ENCODE measurements at regions of chr2 and their contacts with region 1.

Region 1: GRCh38 chr2:240579771-240580614 is 6.5 kb upstream of the CAPN10 start:
- DNase-seq: peak; percentile 76
- H3K4me3 ChIP-seq: no peak overlapping the region
- H3K27ac ChIP-seq: peak overlapping the region; percentile 69
- H3K4me1 ChIP-seq: peaks cover 61% of the 10 kb centered on the region
- CTCF ChIP-seq: peak; percentile 75

Region 2: DNA sequence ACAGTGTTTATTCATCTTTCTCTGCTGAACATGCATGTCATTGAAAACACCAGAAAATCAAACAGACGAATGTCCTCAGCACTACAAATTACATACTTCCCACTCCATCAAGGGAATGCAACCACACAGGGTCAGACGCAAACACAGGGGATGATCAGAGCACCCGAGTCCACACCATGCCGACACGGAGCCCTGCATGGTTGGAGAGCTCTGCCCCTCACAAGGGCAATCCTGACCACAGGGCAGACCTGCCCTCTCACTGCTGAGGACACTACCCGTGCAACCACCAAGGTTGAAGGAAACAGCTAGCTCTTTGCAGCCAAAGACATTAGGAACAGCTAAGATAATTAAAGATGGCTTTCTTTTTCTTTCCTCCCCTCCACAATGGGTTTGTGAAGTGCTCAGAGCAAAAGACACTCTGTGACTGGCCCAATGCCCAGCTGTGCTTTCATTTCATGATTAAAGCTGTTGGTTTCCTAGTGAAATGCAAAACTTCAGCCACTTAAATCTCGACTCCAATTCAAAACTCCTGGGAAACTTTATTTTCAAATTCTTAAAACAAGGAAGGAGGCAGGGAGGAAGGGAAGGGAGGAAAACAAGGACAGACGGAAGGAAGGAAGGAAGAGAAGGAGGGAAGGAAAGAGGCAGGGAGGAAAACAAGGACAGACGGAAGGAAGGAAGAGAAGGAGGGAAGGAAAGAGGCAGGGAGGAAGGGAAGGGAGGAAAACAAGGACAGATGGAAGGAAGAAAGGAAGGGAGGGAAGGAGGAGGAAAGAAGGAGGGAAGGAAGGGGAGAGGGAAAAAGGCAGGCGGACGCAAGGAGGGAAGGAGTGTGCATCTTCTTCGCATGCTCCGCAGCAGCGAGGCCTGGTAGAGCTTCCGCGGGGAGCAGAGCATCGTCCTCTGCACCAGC is 620.7 kb before region 1 on chr2:
- CTCF ChIA-PET with region 1: no interaction called
- POLR2A ChIA-PET with region 1: no interaction called
- intact Hi-C with region 1: no loop called
- DNase-seq: no peak
- H3K4me3 ChIP-seq: no peak overlapping the region
- H3K27ac ChIP-seq: no peak overlapping the region
- H3K4me1 ChIP-seq: no peaks in the 10 kb centered on the region
- CTCF ChIP-seq: no peak

Region 3: GRCh38 chr2:240355001-240355976 is 224.7 kb before region 1 on chr2:
- CTCF ChIA-PET with region 1: no interaction called
- POLR2A ChIA-PET with region 1: no interaction called
- intact Hi-C with region 1: no loop called
- DNase-seq: no peak
- H3K4me3 ChIP-seq: no peak overlapping the region
- H3K27ac ChIP-seq: no peak overlapping the region
- H3K4me1 ChIP-seq: no peaks in the 10 kb centered on the region
- CTCF ChIP-seq: no peak

Region 4: DNA sequence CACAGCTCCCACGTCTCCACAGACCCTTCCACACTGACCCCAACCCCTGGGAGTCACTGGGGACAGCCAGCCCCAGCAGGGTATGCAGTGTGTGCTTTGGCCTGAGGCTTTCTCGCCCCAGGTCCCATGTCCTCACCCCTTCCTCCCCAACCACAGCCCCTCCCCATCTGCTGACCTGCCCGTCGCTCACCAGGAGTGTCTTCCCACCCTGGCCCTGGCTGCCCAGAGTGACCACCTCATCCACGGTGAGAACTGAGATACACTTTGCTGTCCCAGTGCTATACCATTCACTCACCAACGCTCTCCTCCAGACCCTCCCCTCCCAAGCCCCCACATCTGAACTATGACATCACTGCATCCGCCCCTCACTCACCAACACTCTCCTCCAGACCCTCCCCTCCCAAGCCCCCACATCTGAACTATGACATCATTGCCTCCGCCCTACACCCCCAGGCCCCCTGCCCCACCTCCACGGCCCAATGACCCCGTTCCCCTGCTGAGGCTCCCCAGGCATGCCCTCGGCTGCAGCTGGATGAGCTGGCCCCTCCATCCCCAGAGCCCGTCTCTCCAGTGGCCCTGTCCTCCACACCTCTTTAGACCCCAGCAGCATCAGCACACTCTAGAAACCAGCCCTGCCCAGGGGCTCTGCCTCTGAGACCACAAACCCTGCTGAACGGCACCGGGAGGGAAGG is 77.4 kb before region 1 on chr2:
- CTCF ChIA-PET with region 1: no interaction called
- POLR2A ChIA-PET with region 1: no interaction called
- intact Hi-C with region 1: no loop called
- DNase-seq: no peak
- H3K4me3 ChIP-seq: no peak overlapping the region
- H3K27ac ChIP-seq: no peak overlapping the region
- H3K4me1 ChIP-seq: no peaks in the 10 kb centered on the region
- CTCF ChIP-seq: no peak

Region 5: GRCh38 chr2:240566203-240567136 is 13.5 kb before region 1 on chr2:
- CTCF ChIA-PET with region 1: interaction called, 7 read pairs
- POLR2A ChIA-PET with region 1: interaction called, 59 read pairs
- intact Hi-C with region 1: loop called (anchors 1 kb)
- DNase-seq: peak; percentile 90
- H3K4me3 ChIP-seq: peak overlapping the region; percentile 72
- H3K27ac ChIP-seq: peak overlapping the region; percentile 84
- H3K4me1 ChIP-seq: peaks cover 63% of the 10 kb centered on the region
- CTCF ChIP-seq: peak; percentile 80

Region 6: DNA sequence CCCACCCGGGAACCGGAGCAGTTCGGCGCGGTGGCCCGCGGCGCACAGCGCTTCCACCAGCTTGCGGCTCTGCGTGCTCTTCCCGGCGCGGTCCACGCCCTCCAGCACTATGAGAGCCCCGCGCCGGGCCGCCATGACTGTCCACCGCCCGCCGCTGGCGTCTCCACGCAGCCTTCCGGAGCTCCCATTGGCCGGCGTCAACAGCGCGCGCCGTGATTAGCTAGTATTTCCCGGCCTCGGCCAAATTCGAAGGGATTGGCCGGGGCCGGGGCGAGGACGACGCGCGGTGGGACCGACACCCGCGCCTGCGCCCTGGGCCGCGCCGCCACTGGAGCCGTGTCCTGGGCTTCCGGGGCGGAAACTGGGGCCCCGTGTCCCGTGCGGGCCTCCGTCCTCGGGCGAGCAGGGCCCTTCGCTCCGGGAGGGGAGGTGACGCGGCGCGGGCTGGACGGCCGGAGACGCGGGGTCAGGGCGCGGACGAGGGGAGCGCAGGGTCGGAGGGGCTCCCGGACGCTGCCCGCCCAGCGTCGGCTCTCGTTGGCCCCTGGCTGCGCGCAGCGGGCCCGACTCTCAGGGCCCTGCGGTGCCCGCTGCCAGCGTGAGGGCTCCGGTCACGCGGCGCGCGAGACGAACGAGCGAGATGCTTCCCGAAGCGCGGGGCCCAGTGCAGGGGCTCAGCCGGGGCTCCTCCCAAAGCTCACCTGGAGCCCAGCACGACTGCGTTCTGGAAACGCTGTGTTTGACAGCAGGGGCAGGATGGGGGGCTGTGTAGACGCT is 1106.8 kb after region 1 on chr2 and contains the start of gene DTYMK:
- CTCF ChIA-PET with region 1: no interaction called
- POLR2A ChIA-PET with region 1: no interaction called
- intact Hi-C with region 1: no loop called
- DNase-seq: peak; percentile 96
- H3K4me3 ChIP-seq: peak within 1 kb of the TSS; percentile 90
- H3K27ac ChIP-seq: peak within 1 kb of the TSS; percentile 69
- H3K4me1 ChIP-seq: peaks cover 17% of the 10 kb centered on the region
- CTCF ChIP-seq: no peak
- total RNA-seq, gene DTYMK: 104 and 118 TPM in 2 replicates